Activated naive CD8-positive, alpha-beta T cell treated with anti-CD3 and anti-CD28 coated beads, Interleukin-2, amount 10 ng/mL, durations not matched to agents 7 days and 5 days (primary cell): ENCODE measurements at regions of chr15 and their contacts with region 1.

Region 1: GRCh38 chr15:65869127-65869953 is at the start of gene RAB11A:
- DNase-seq: peak; percentile 94
- ATAC-seq: peak; percentile 93
- H3K4me3 Mint-ChIP-seq: peak within 1 kb of the TSS; percentile 100
- H3K27ac Mint-ChIP-seq: peak within 1 kb of the TSS; percentile 98
- H3K4me1 Mint-ChIP-seq: peaks cover 18% of the 10 kb centered on the region
- H3K27me3 Mint-ChIP-seq: peaks cover 3% of the 10 kb centered on the region
- total RNA-seq, gene RAB11A: 141 to 151 TPM

Region 2: GRCh38 chr15:65610871-65611718 is 258.2 kb before region 1 on chr15 and contains the start of gene INTS14:
- POLR2A ChIA-PET with region 1: interaction called, 14 read pairs
- DNase-seq: peak; percentile 95
- ATAC-seq: peak; percentile 98
- H3K4me3 Mint-ChIP-seq: peak within 1 kb of the TSS; percentile 89
- H3K27ac Mint-ChIP-seq: peak within 1 kb of the TSS; percentile 95
- H3K4me1 Mint-ChIP-seq: peaks cover 26% of the 10 kb centered on the region
- H3K27me3 Mint-ChIP-seq: no peaks in the 10 kb centered on the region
- total RNA-seq, gene INTS14: 42.8 to 43.0 TPM

Region 3: DNA sequence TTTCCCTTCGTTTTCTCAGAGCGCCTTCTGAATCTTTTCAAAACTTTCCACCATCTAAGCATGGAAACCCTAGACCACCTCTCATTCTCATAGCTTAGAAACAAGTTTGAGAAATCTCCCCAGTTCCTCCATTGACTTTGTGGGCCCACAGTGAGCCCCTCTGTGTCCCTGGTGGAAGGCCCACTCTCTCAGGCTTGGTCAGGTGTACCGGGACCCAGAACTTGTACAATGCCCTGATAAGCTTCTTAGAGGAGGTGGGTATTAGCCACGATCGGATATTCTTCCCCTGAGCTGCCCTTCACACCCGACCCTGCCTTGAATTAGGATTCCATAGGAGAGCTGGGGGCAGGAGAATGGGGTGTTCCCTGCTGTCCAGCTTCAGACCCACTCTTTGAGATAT is 247.7 kb before region 1 on chr15 and contains the start of gene SLC24A1:
- POLR2A ChIA-PET with region 1: no interaction called
- DNase-seq: no peak
- ATAC-seq: no peak
- H3K4me3 Mint-ChIP-seq: no peak within 1 kb of the TSS
- H3K27ac Mint-ChIP-seq: no peak within 1 kb of the TSS
- H3K4me1 Mint-ChIP-seq: no peaks in the 10 kb centered on the region
- H3K27me3 Mint-ChIP-seq: no peaks in the 10 kb centered on the region
- total RNA-seq, gene SLC24A1: 4.9 to 7.1 TPM

Region 4: DNA sequence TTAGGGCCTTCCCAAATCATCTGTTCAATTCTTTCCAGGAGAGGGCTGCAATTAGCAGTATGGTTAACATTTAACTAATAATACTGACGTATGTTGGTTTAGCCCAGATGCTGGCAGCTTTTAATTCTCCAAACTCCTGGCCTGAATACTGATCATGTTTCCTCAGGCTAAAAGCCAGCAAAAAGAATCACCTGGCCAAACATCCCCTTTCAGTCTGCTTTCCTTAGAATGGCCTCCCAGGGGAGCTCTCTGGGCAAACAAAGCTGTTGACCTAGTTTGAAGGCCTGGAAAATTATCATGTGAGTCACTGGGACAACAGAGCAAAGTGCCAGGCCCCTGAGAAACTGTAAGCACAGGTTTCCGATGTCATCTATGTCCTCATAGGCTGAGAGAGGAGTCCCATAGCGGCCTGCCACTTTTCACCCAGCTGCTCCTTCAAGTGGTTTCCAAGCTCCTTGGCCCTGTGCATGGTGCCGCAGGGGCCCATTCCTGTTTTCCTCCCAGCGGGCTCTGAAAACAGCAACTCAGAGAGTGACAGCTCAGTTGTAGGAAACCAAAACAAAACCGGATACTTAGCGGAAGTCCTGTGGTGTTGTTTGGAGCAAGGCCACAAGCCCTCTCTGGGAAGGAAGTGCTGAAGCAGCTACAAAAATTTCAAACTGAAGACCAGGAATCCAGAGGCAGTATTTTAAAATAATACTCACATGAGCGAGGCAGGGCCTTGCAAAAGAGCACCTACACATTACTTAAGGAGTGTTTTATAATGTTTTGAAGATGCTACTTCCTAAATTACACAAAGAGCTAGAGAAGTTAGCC is 36.6 kb before region 1 on chr15:
- POLR2A ChIA-PET with region 1: interaction called, 19 read pairs
- DNase-seq: peak; percentile 68
- ATAC-seq: peak; percentile 66
- H3K4me3 Mint-ChIP-seq: peak overlapping the region; percentile 84
- H3K27ac Mint-ChIP-seq: peak overlapping the region; percentile 94
- H3K4me1 Mint-ChIP-seq: peaks cover 46% of the 10 kb centered on the region
- H3K27me3 Mint-ChIP-seq: no peaks in the 10 kb centered on the region

Region 5: DNA sequence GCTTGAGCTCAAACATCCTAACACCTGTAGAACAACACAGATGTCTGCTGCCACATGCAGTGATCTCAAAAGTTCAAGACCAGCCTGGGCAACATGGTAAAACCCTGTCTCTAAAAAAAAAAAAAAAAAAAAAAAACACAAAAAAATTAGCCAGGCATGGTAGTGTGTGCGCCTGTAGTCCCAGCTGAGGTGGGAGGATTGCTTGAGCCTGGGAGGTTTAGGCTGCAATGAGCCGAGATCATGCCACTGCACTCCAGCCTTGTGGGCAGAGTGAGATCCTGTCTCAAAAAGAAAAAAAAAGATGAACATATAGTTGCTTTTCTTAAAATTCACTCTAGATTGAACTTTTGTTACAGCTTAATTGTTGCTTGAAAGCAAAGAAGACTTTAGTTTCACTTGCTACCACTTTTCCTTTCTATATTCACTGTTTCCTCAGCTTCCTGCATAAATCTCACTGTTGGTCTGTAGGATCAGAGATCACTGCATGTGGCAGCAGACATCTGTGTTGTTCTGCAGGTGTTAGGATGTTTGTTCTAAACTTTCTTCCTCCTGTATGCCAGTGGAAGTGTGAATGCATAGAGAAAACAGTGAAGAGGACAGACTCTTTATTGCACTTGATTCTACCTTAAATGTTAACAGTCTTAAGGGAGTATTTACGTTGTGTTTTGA is 12.6 kb after region 1 on chr15:
- POLR2A ChIA-PET with region 1: interaction called, 28 read pairs
- DNase-seq: no peak
- ATAC-seq: peak; percentile 73
- H3K4me3 Mint-ChIP-seq: peak overlapping the region; percentile 53
- H3K27ac Mint-ChIP-seq: peak overlapping the region; percentile 56
- H3K4me1 Mint-ChIP-seq: peaks cover 37% of the 10 kb centered on the region
- H3K27me3 Mint-ChIP-seq: no peaks in the 10 kb centered on the region

Region 6: GRCh38 chr15:65927545-65927944 is 58.2 kb after region 1 on chr15:
- POLR2A ChIA-PET with region 1: no interaction called
- DNase-seq: no peak
- ATAC-seq: no peak
- H3K4me3 Mint-ChIP-seq: no peak overlapping the region
- H3K27ac Mint-ChIP-seq: no peak overlapping the region
- H3K4me1 Mint-ChIP-seq: no peaks in the 10 kb centered on the region
- H3K27me3 Mint-ChIP-seq: peaks cover 2% of the 10 kb centered on the region